ENCODE measurements at regions of chr1 and their contacts with region 1.

Region 1: DNA sequence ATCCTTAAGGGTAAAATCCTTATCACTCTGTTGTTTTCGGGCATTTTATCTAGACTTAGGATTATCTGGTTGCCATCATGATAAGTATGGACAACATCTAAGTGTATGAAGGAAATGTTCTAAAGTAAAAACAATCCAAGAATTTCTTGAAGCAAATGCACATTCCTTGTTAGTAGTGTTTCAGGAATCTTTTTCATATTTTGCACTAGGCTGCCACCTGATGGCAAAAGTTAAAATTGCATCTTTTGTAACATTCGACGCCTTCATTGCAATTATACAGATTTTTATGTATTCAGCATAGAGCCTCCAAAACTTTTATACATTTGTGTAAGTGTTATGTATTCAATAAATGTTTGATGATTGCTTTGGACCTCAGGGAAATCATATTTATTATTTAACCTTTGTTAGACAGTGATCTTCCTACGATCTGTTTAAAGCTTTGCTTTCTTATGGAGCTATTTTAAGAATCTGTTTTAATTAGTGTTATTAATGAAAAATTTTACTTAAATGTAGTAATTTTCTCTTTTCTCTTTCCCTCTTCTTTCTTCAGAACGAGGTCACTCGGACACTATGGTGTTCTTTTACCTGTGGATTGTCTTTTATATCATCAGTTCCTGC is 49.4 kb upstream of the KIAA1614 start:
- H3K4me3 Mint-ChIP-seq: no peak overlapping the region
- H3K27ac Mint-ChIP-seq: no peak overlapping the region
- H3K4me1 Mint-ChIP-seq: peaks cover 11% of the 10 kb centered on the region
- H3K27me3 Mint-ChIP-seq: peaks cover 2% of the 10 kb centered on the region

Region 2: DNA sequence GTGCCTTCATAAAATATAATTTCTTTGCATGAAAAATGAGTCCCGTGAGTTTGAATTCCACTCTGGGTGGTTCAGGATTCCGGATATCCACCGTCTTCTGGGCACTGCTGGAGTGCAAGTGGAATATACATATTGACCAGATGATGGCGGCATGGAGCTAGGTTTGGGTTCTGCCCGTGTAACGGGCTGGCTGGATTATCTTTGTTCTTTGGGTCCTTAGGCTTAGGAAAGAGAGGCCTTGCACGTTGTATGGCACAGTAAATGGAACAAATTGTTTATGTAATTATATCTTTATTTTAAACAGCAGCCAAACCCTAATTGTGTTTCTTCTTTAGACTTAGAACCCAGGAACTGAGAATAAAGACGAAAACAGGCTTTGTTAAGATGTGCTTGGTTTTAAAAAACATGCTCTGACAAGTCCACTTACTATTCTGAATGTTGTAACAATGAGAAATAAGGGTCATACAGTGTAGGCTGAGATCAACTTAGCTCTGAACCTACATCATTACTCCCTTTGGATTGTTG is 347.3 kb before region 1 on chr1:
- intact Hi-C with region 1: loop called (anchors 5 kb)
- H3K4me3 Mint-ChIP-seq: no peak overlapping the region
- H3K27ac Mint-ChIP-seq: no peak overlapping the region
- H3K4me1 Mint-ChIP-seq: no peaks in the 10 kb centered on the region
- H3K27me3 Mint-ChIP-seq: peaks cover 2% of the 10 kb centered on the region

Region 3: DNA sequence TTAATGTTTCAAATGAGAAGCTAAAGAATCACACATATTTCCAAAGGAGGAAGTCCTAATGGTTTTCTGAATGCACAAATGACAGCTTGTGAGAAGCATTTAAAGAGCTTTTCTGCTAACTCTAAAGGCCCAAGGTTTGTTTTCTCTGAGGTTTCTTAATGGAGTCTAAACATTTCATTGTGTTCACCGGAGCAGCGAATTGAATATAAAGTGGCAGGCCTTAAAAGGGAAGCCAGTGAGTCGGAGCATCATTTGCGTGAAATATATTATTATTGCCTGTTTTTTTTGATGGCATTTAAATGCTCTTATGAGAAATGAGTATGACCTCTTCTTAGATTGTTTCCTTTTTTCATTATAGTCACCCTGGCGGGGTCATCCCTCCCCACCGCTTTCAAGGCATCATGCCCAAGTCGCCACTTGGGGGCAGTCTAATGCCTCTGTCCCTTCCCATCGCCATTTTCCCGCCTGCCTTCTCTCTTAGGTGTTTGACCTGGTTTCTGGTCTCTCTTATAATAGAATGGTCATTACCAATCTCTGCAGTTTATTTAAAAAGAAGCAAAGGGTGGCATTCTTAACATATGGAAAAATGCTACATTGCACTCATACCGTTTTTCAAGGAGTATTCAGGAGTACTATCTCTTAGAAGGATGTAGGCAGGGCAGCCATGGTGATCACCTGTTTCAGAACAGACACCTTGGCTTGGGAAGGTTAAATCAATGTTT is 329.8 kb before region 1 on chr1:
- intact Hi-C with region 1: loop called (anchors 5 kb)
- H3K4me3 Mint-ChIP-seq: no peak overlapping the region
- H3K27ac Mint-ChIP-seq: no peak overlapping the region
- H3K4me1 Mint-ChIP-seq: no peaks in the 10 kb centered on the region
- H3K27me3 Mint-ChIP-seq: peaks cover 4% of the 10 kb centered on the region

Region 4: DNA sequence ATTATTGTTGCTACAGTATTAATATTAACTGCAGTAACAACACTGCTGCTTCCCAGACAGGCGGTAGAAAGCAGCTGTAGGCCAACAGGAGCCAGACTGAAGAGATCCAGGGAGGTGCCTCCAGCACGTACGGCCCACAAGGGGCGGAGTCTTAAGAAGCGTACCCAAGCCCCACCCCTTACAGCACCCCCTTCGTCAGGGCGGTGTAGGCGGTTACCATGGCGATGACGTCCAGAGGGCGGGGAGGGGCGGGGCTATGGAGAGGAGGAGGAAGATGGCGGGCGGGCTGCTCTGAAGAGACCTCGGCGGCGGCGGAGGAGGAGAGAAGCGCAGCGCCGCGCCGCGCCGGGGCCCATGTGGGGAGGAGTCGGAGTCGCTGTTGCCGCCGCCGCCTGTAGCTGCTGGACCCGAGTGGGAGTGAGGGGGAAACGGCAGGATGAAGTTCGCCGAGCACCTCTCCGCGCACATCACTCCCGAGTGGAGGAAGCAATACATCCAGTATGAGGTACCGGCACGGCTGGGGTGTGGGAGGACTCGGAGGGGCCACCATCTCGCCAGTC is 231.4 kb before region 1 on chr1 and contains the start of gene XPR1:
- intact Hi-C with region 1: loop called (anchors 5 kb)
- H3K4me3 Mint-ChIP-seq: no peak within 1 kb of the TSS
- H3K27ac Mint-ChIP-seq: no peak within 1 kb of the TSS
- H3K4me1 Mint-ChIP-seq: peaks cover 5% of the 10 kb centered on the region
- H3K27me3 Mint-ChIP-seq: no peaks in the 10 kb centered on the region

Region 5: DNA sequence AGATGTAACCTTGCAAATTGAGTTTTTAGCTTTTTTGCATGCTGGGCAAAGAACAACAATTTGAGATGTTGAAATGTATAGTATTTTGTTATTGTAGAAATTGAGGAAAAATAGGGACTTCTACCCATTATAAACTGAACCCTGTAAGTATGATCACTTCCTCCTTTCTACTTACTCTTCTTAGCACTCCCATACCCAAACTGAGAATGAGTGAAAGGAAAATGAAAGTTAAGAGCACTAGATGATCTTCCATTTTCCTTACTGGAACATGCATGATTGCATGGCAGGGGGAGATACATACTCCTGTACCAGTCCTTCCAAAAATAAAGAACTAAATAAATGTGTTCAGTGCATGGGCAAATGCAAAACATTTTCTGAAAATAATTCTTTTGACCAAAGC is 58.0 kb before region 1 on chr1:
- intact Hi-C with region 1: no loop called
- H3K4me3 Mint-ChIP-seq: no peak overlapping the region
- H3K27ac Mint-ChIP-seq: no peak overlapping the region
- H3K4me1 Mint-ChIP-seq: peaks cover 5% of the 10 kb centered on the region
- H3K27me3 Mint-ChIP-seq: no peaks in the 10 kb centered on the region

Region 6: DNA sequence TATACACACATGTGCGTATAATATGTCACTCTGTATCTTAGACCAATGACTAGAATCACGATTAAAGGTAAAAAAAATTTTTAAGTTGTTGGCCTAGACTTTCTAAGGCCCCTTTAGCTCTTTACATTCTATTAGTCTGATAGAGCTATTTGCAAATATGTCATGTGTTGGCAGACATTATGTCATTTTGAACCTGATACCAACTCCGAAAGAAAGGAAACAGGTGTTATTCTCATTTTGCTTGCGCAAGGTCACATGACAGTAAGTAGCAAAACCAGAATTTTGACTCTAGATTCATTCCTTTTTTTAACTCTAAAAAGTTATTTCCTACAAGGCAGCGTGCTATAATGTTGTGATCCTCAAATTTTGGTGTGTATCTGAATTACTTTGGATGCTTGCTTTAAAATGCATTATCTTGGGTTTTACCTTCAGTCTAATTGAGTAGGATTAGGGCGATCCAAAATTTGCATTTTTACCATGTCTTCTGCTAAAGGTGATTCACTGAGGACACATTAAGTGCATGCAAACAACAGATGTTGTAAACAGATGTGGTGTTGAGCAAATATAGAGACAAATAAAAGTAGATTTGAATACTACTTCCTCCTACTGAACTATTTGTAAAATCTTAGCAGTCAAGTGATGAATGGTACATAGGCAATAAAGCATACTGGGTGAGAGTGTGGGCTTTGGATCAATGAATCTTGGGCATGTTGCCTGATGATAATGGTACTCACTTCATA is 14.1 kb before region 1 on chr1:
- intact Hi-C with region 1: no loop called
- H3K4me3 Mint-ChIP-seq: no peak overlapping the region
- H3K27ac Mint-ChIP-seq: no peak overlapping the region
- H3K4me1 Mint-ChIP-seq: peaks cover 18% of the 10 kb centered on the region
- H3K27me3 Mint-ChIP-seq: peaks cover 31% of the 10 kb centered on the region

Region 7: GRCh38 chr1:180912801-180913565 is 49.7 kb after region 1 on chr1 and contains the start of gene KIAA1614:
- intact Hi-C with region 1: no loop called
- H3K4me3 Mint-ChIP-seq: peak within 1 kb of the TSS; percentile 63
- H3K27ac Mint-ChIP-seq: no peak within 1 kb of the TSS
- H3K4me1 Mint-ChIP-seq: peaks cover 9% of the 10 kb centered on the region
- H3K27me3 Mint-ChIP-seq: peaks cover 64% of the 10 kb centered on the region

Region 8: GRCh38 chr1:181326348-181326747 is 463.1 kb after region 1 on chr1:
- intact Hi-C with region 1: no loop called
- H3K4me3 Mint-ChIP-seq: no peak overlapping the region
- H3K27ac Mint-ChIP-seq: no peak overlapping the region
- H3K4me1 Mint-ChIP-seq: no peaks in the 10 kb centered on the region
- H3K27me3 Mint-ChIP-seq: peaks cover 22% of the 10 kb centered on the region